Prostate gland (tissue), 2 donors: ENCODE measurements at regions of chr16 and their contacts with region 1.

Region 1: GRCh38 chr16:24151482-24151939 is 104.6 kb upstream of the CACNG3 start:
- DNase-seq: no peak
- H3K4me3 ChIP-seq: no peak overlapping the region
- H3K27ac ChIP-seq: no peak overlapping the region
- H3K4me1 ChIP-seq: no peaks in the 10 kb centered on the region
- H3K27me3 ChIP-seq: no peaks in the 10 kb centered on the region
- CTCF ChIP-seq: no peak
- POLR2A ChIP-seq: no peak

Region 2: GRCh38 chr16:24208710-24209109 is 57.2 kb after region 1 on chr16:
- intact Hi-C with region 1: loop called (anchors 10 kb)
- DNase-seq: no peak
- H3K4me3 ChIP-seq: no peak overlapping the region
- H3K27ac ChIP-seq: no peak overlapping the region
- H3K4me1 ChIP-seq: no peaks in the 10 kb centered on the region
- H3K27me3 ChIP-seq: no peaks in the 10 kb centered on the region
- CTCF ChIP-seq: no peak
- POLR2A ChIP-seq: no peak